ENCODE measurements at regions of chr2 and their contacts with region 1.

Region 1: DNA sequence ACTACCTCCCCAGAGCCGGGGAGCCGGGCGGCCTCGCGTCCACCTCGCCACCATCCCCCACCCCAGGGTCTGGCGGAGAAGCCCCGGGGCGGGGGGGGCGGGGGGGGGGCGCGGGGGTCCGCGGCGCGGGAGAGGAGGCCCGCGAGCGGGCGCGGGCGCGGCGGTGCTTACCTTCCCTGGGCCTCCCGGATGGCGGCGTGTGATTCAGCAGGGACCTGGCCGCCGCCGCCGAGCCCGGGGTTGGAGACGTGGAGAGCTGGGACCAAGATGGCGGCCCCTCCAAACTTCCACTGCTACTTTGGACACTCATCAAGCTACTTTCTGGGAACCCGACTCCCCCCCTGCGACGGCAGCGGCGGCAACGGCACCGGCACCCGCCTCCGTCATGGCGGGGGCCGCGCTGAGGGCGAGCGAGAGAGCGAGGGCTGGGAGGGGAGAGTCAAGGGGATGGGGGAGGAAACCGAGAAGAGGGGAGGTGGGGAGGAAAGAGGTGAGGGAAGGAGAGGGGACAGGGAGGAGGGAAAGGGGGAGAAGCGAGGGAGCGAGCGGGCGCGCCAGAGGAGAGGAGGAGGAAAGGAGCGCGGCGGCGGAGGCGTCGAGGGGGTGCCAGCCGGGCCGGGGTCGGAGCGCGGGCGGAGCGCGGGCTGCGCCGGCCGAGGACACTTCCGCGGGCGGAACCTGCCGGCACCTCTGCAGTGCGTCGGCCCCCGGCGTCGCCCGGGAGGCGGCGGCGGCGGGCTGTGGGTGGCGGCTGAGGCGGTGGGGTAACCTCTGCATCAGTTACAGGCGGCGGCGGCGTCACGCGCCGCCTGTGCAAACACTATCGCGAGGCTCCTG is at the start of gene TLK1:
- DNase-seq: peak; percentile 52 to 91 (median 78)
- ATAC-seq: peak; percentile 65
- H3K4me3 ChIP-seq: peak within 1 kb of the TSS; percentile 86
- H3K4me3 Mint-ChIP-seq: peak within 1 kb of the TSS; percentile 96
- H3K27ac ChIP-seq: peak within 1 kb of the TSS; percentile 62 to 95
- H3K27ac Mint-ChIP-seq: peak within 1 kb of the TSS; percentile 95
- H3K4me1 ChIP-seq: peaks cover 30% of the 10 kb centered on the region
- H3K4me1 Mint-ChIP-seq: peaks cover 76% of the 10 kb centered on the region
- H3K27me3 ChIP-seq: no peaks in the 10 kb centered on the region
- H3K27me3 Mint-ChIP-seq: no peaks in the 10 kb centered on the region
- CTCF ChIP-seq: no peak
- total RNA-seq, gene TLK1: 135 to 138 TPM

Region 2: DNA sequence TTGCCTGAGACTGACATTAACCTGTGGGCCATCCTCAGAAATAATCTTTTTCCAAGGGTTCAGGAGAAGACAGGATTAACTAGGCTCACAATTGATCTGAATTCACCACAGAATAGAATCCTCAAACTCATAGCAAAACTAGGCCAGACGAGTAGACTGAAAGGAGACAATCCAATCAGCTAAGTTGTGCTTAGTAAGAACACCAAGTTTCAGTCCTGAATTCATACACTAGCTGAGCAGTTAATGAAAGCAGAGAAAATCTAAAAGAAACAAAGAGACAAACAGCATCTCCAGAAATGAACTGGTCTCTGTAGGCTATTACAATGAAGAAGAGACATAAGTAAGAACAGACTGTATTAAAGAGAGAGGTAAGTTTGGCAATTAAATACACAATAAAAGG is 141.8 kb before region 1 on chr2:
- CTCF ChIA-PET with region 1: interaction called, 3 read pairs
- POLR2A ChIA-PET with region 1: no interaction called
- intact Hi-C with region 1: loop called in 1 of 2 experiments (anchors 5 kb)
- DNase-seq: no peak
- ATAC-seq: no peak
- H3K4me3 ChIP-seq: no peak overlapping the region
- H3K4me3 Mint-ChIP-seq: peak overlapping the region; percentile 15
- H3K27ac ChIP-seq: no peak overlapping the region
- H3K27ac Mint-ChIP-seq: peak overlapping the region; percentile 72
- H3K4me1 ChIP-seq: no peaks in the 10 kb centered on the region
- H3K4me1 Mint-ChIP-seq: peaks cover 57% of the 10 kb centered on the region
- H3K27me3 ChIP-seq: no peaks in the 10 kb centered on the region
- H3K27me3 Mint-ChIP-seq: no peaks in the 10 kb centered on the region
- CTCF ChIP-seq: no peak

Region 3: DNA sequence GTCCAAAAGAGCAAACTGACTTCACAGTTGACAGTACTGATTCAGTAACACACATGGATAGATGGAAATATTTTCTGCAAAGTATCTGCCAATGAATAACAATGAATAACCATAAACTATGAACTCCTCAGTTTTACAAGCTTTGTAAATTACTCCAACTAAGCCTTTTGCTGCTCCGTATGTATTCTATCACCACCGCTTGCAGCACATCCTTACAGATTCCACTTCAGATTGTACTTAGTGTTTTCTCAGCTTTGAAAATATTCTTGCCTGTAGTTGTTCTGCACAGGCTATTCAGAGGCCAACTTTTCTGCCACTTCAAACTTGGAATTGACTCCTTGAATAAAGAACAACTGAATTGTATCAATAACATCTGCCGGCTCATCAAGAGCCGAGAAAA is 35.8 kb before region 1 on chr2:
- CTCF ChIA-PET with region 1: no interaction called
- POLR2A ChIA-PET with region 1: no interaction called
- intact Hi-C with region 1: loop called in 1 of 2 experiments (anchors 5 kb)
- DNase-seq: no peak
- ATAC-seq: no peak
- H3K4me3 ChIP-seq: no peak overlapping the region
- H3K4me3 Mint-ChIP-seq: no peak overlapping the region
- H3K27ac ChIP-seq: no peak overlapping the region
- H3K27ac Mint-ChIP-seq: peak overlapping the region; percentile 4
- H3K4me1 ChIP-seq: peaks cover 13% of the 10 kb centered on the region
- H3K4me1 Mint-ChIP-seq: peaks cover 83% of the 10 kb centered on the region
- H3K27me3 ChIP-seq: no peaks in the 10 kb centered on the region
- H3K27me3 Mint-ChIP-seq: no peaks in the 10 kb centered on the region
- CTCF ChIP-seq: no peak

Region 4: GRCh38 chr2:171320208-171320621 is 159.9 kb after region 1 on chr2:
- CTCF ChIA-PET with region 1: interaction called, 3 read pairs
- POLR2A ChIA-PET with region 1: interaction called, 14 read pairs
- intact Hi-C with region 1: loop called in 1 of 2 experiments (anchors 10 kb)
- DNase-seq: no peak
- ATAC-seq: no peak
- H3K4me3 ChIP-seq: no peak overlapping the region
- H3K4me3 Mint-ChIP-seq: peak overlapping the region; percentile 4
- H3K27ac ChIP-seq: no peak overlapping the region
- H3K27ac Mint-ChIP-seq: peak overlapping the region; percentile 73
- H3K4me1 ChIP-seq: peaks cover 35% of the 10 kb centered on the region
- H3K4me1 Mint-ChIP-seq: peaks cover 50% of the 10 kb centered on the region
- H3K27me3 ChIP-seq: no peaks in the 10 kb centered on the region
- H3K27me3 Mint-ChIP-seq: no peaks in the 10 kb centered on the region
- CTCF ChIP-seq: no peak

Region 5: GRCh38 chr2:171416009-171416926 is 255.9 kb after region 1 on chr2:
- CTCF ChIA-PET with region 1: interaction called, 9 read pairs
- POLR2A ChIA-PET with region 1: interaction called, 16 read pairs
- intact Hi-C with region 1: loop called (anchors 1 to 2 kb)
- DNase-seq: peak; percentile 62 to 90 (median 77)
- ATAC-seq: peak; percentile 99
- H3K4me3 ChIP-seq: no peak overlapping the region
- H3K4me3 Mint-ChIP-seq: no peak overlapping the region
- H3K27ac ChIP-seq: no peak overlapping the region
- H3K27ac Mint-ChIP-seq: peak overlapping the region; percentile 18
- H3K4me1 ChIP-seq: peaks cover 4% of the 10 kb centered on the region
- H3K4me1 Mint-ChIP-seq: peaks cover 6% of the 10 kb centered on the region
- H3K27me3 ChIP-seq: no peaks in the 10 kb centered on the region
- H3K27me3 Mint-ChIP-seq: no peaks in the 10 kb centered on the region
- CTCF ChIP-seq: peak; percentile 89

Region 6: DNA sequence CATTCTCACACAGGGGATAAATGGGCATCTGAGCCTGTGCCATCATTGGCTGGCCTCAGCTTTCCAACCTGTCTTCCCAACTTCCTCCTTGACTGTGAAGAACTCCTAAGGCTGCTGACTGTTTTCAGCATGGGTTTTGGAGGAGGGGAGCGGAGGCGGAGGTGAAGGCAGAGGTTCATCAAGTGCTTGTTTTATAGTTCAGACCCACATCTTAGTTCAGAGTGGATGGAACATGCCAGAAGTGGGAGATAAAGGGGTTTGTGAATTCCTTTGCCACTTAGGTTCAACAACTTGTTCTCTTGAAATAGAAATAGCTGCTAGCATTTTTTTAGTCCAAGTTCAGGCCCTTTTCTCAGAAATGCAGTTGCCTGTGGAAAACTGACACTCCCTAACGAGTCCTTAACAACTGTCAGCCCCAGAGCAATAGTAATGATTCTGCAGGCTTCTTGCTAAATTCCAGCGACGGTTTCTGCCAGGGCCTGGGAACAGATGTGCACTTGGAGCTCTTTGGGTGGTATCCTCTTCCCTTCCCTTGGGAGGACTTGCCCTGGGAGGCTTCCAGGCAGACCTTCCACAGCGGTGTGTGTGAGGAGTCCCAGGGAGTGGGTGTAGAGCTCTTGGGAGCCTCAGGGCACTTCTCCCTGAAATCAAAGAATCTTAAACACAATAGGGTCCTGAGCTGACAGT is 1237.0 kb after region 1 on chr2:
- CTCF ChIA-PET with region 1: no interaction called
- POLR2A ChIA-PET with region 1: no interaction called
- intact Hi-C with region 1: no loop called
- DNase-seq: no peak
- ATAC-seq: no peak
- H3K4me3 ChIP-seq: no peak overlapping the region
- H3K4me3 Mint-ChIP-seq: no peak overlapping the region
- H3K27ac ChIP-seq: no peak overlapping the region
- H3K27ac Mint-ChIP-seq: no peak overlapping the region
- H3K4me1 ChIP-seq: no peaks in the 10 kb centered on the region
- H3K4me1 Mint-ChIP-seq: no peaks in the 10 kb centered on the region
- H3K27me3 ChIP-seq: no peaks in the 10 kb centered on the region
- H3K27me3 Mint-ChIP-seq: no peaks in the 10 kb centered on the region
- CTCF ChIP-seq: no peak

Measured in CD4-positive, alpha-beta T cell (primary cell).